ENCODE measurements at regions of chr5 and their contacts with region 1.

Region 1: DNA sequence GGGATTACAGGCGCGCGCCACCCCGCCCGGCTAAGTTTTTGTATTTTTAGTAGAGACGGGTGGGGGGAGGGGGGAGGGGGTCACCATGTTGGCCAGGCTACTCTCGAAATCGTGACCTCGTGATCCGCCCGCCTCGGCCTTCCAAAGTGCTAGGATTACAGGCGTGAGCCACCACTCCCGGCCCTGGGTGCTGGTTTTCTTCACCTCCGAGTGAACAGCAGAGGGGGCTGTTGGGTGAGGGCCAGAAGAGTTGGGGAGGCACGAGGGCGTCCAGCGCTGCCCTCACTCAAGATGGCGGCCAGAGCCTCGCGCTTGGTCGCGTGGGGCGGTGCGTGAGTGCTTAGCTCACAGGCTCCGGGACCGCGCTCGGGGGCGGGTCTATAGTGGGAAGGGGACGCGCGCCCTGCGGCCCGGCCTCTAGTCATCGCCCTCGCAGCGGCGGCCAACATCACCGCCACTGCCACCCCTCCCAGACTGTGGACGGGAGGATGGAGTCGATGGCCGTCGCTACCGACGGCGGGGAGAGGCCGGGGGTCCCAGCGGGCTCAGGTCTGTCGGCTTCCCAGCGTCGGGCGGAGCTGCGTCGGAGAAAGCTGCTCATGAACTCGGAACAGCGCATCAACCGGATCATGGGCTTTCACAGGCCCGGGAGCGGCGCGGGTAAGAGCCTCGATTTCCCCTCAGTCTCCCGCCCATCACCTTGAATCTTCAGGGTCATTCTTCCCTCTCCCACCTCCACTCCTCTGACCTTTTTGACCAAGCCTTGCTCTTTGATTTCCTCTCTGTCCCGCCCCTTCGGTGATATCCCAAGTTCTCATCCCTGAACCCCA is at the start of gene CAMLG:
- DNase-seq: peak; percentile 99
- H3K4me3 Mint-ChIP-seq: peak within 1 kb of the TSS; percentile 94
- H3K27ac Mint-ChIP-seq: peak within 1 kb of the TSS; percentile 91
- H3K4me1 Mint-ChIP-seq: peaks cover 13% of the 10 kb centered on the region
- H3K27me3 Mint-ChIP-seq: no peaks in the 10 kb centered on the region
- total RNA-seq, gene CAMLG: 28.2 and 28.3 TPM in 2 replicates

Region 2: GRCh38 chr5:134365604-134366003 is 372.7 kb before region 1 on chr5:
- intact Hi-C with region 1: loop called (anchors 2 kb)
- DNase-seq: no peak
- H3K4me3 Mint-ChIP-seq: no peak overlapping the region
- H3K27ac Mint-ChIP-seq: no peak overlapping the region
- H3K4me1 Mint-ChIP-seq: peaks cover 23% of the 10 kb centered on the region
- H3K27me3 Mint-ChIP-seq: no peaks in the 10 kb centered on the region

Region 3: GRCh38 chr5:134637161-134637582 is 101.2 kb before region 1 on chr5:
- intact Hi-C with region 1: loop called (anchors 1 kb)
- DNase-seq: no peak
- H3K4me3 Mint-ChIP-seq: no peak overlapping the region
- H3K27ac Mint-ChIP-seq: no peak overlapping the region
- H3K4me1 Mint-ChIP-seq: peaks cover 6% of the 10 kb centered on the region
- H3K27me3 Mint-ChIP-seq: no peaks in the 10 kb centered on the region

Region 4: DNA sequence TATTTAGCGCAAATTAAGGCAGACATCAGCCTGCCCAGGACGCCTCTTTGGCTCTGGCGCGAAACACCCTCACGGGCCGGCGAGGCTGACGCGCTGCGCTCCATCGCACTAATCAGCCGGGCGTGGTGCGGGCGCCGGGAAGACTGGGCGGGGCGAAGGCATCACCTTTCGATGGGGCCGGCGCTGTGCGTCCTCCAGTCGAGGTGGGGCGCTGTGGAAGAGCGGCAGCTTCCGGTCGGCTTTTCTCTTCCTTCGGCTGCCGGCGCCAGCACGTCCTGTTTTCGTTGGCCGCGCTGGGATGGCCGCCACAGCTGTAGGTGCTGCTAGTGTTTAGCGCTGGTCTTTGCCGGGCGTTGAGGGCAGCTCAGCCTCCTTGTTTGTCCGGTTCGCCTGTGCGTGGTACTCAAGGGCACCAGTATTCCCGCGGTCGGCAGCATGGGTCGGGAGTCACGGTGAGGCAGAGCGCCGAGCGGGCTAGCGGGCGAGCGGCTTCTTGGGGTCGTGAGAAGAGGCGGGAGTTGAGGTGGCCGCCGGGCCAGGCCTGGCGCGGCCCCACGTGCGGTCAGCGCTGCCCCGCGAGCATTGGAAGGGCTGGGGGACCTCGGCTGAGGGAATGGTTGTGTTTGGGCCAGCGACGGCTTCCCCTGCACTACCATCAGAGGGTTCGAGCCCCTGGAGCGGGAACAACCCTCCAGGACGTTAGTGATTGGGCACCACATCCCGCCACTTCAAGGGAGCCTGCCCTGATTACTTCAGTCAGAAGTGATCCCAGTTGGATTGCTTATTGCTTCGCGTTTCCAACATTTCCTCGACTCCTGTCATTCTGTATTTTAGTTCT is 20.4 kb after region 1 on chr5 and contains the start of gene DDX46:
- intact Hi-C with region 1: loop called (anchors 1 kb)
- DNase-seq: peak; percentile 99
- H3K4me3 Mint-ChIP-seq: peak within 1 kb of the TSS; percentile 99
- H3K27ac Mint-ChIP-seq: peak within 1 kb of the TSS; percentile 95
- H3K4me1 Mint-ChIP-seq: peaks cover 31% of the 10 kb centered on the region
- H3K27me3 Mint-ChIP-seq: no peaks in the 10 kb centered on the region
- total RNA-seq, gene DDX46: 83.8 and 89.4 TPM in 2 replicates

Region 5: DNA sequence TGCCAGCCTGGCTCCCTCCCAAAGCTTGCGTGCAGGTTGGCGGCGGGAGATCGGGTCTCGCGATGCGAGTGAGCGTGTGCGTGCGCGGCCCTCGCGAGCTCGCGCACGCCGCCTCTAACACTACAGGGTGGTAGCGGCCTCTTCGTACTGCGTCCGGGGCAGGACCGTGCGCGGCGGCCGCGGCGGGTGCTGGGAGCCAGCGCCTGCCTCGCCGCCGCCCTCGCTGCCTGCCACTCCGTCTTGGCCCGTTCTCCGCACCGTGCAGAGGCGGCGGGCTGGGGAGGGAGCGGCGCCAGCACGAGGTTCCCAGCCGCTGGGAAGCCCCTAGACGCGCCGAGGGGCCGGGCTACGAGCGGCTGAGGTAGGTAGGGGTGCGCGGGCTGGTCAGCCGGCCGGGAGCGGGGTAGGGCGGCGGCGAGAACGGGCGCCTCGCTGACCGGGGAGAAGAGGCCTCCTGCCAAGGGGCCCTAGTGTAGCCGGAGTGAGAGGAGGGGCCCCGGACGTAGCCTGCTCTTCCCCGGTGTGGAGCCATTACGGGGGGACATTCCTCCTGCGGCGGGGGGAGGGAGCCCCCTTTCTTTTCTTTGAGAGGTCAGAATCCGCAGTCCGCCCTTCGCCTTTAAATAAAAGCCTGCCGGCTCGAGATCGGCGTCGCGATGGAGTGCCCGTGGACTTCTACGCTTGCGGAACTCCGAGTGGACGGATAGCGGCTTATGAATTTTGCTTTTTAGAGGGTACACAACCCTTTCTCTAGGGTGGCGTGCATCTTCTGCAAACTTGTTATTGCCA is 107.7 kb after region 1 on chr5 and contains the start of gene C5orf24:
- intact Hi-C with region 1: loop called (anchors 1 kb)
- DNase-seq: peak; percentile 98
- H3K4me3 Mint-ChIP-seq: peak within 1 kb of the TSS; percentile 98
- H3K27ac Mint-ChIP-seq: peak within 1 kb of the TSS; percentile 97
- H3K4me1 Mint-ChIP-seq: peaks cover 21% of the 10 kb centered on the region
- H3K27me3 Mint-ChIP-seq: no peaks in the 10 kb centered on the region
- total RNA-seq, gene C5orf24: 38.7 and 43.9 TPM in 2 replicates

Region 6: GRCh38 chr5:134904630-134905245 is 166.4 kb after region 1 on chr5 and contains the start of gene PCBD2:
- intact Hi-C with region 1: loop called (anchors 1 kb)
- DNase-seq: peak; percentile 98
- H3K4me3 Mint-ChIP-seq: peak within 1 kb of the TSS; percentile 97
- H3K27ac Mint-ChIP-seq: peak within 1 kb of the TSS; percentile 99
- H3K4me1 Mint-ChIP-seq: peaks cover 14% of the 10 kb centered on the region
- H3K27me3 Mint-ChIP-seq: no peaks in the 10 kb centered on the region
- total RNA-seq, gene PCBD2: 11.0 and 14.1 TPM in 2 replicates

Measured in activated CD4-positive, alpha-beta T cell treated with anti-CD3 and anti-CD28 coated beads, Interleukin-2, amount 10 ng/mL, durations not matched to agents 24 days and 14 days (primary cell).